CD4-positive, alpha-beta T cell (primary cell): ENCODE measurements at regions of chr22 and their contacts with region 1.

Region 1: GRCh38 chr22:37843741-37843990 is 468 bp downstream of the ANKRD54 start:
- DNase-seq: peak in 3 of 14 experiments; percentile 46 to 55 (median 48)
- ATAC-seq: peak; percentile 23
- H3K4me3 ChIP-seq: peak overlapping the region; percentile 54
- H3K4me3 Mint-ChIP-seq: peak overlapping the region; percentile 89
- H3K27ac ChIP-seq: peak overlapping the region in 1 of 2 donors; percentile 82
- H3K27ac Mint-ChIP-seq: peak overlapping the region; percentile 82
- H3K4me1 ChIP-seq: peaks cover 28% of the 10 kb centered on the region
- H3K4me1 Mint-ChIP-seq: peaks cover 19% of the 10 kb centered on the region
- H3K27me3 ChIP-seq: no peaks in the 10 kb centered on the region
- H3K27me3 Mint-ChIP-seq: no peaks in the 10 kb centered on the region
- CTCF ChIP-seq: no peak

Region 2: GRCh38 chr22:37686002-37686982 is 157.4 kb before region 1 on chr22 and contains the start of gene NOL12:
- CTCF ChIA-PET with region 1: no interaction called
- POLR2A ChIA-PET with region 1: interaction called, 6 read pairs
- intact Hi-C with region 1: loop called in 1 of 2 experiments (anchors 5 kb)
- DNase-seq: peak; percentile 64 to 90 (median 72)
- ATAC-seq: peak; percentile 92
- H3K4me3 ChIP-seq: peak within 1 kb of the TSS; percentile 72
- H3K4me3 Mint-ChIP-seq: peak within 1 kb of the TSS; percentile 90
- H3K27ac ChIP-seq: peak within 1 kb of the TSS; percentile 75 to 80
- H3K27ac Mint-ChIP-seq: peak within 1 kb of the TSS; percentile 76
- H3K4me1 ChIP-seq: peaks cover 38% of the 10 kb centered on the region
- H3K4me1 Mint-ChIP-seq: peaks cover 27% of the 10 kb centered on the region
- H3K27me3 ChIP-seq: no peaks in the 10 kb centered on the region
- H3K27me3 Mint-ChIP-seq: no peaks in the 10 kb centered on the region
- CTCF ChIP-seq: no peak
- total RNA-seq, gene NOL12: 24.3 to 26.2 TPM

Region 3: DNA sequence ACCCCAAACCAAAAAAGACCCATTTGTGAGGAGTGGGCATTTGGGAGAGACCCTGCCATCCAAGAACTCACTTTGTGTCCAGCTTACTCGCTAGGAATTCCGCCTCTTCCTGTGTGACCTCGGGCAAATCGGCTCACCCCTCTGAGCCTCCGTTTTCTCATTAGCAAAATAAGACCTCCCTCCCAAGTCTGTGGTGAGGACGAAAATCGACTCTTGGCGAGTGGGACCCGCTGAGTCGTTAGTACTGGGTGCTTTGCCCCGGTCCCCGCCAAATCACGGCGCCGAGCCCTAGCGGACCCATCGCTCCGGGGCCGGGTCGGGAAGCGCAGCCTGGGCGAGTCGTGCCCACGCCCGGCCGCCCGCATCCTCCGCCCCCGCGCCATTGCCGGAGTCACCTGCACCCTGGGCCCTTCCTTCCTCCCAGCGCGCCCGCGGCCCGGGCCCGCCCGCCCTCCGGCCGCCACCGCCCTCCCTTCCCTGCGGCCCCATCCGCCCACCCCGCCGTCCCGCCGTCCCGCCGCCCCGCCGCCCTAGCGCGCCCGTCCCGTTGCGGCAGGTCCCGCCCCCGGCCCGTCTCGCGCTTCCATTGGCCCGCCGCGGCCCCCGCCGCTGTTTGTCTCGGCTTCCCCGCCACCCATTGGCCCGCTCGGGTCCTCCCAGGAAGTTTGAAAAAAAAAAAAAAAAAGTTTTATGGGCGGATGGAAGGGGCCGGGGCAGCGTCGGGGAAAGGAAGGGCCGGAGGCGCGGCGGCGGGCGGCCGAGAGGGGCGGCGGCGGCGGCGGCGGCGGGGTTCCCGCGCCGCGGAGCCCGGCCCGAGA is 97.9 kb before region 1 on chr22:
- CTCF ChIA-PET with region 1: no interaction called
- POLR2A ChIA-PET with region 1: interaction called, 5 read pairs
- intact Hi-C with region 1: loop called in 1 of 2 experiments (anchors 5 kb)
- DNase-seq: peak; percentile 68 to 92 (median 84)
- ATAC-seq: peak; percentile 95
- H3K4me3 ChIP-seq: peak overlapping the region; percentile 90
- H3K4me3 Mint-ChIP-seq: peak overlapping the region; percentile 96
- H3K27ac ChIP-seq: peak overlapping the region in 1 of 2 donors; percentile 13
- H3K27ac Mint-ChIP-seq: peak overlapping the region; percentile 83
- H3K4me1 ChIP-seq: peaks cover 27% of the 10 kb centered on the region
- H3K4me1 Mint-ChIP-seq: peaks cover 22% of the 10 kb centered on the region
- H3K27me3 ChIP-seq: no peaks in the 10 kb centered on the region
- H3K27me3 Mint-ChIP-seq: no peaks in the 10 kb centered on the region
- CTCF ChIP-seq: no peak

Region 4: GRCh38 chr22:37807410-37808293 is 36.0 kb before region 1 on chr22 and contains the start of gene GCAT:
- CTCF ChIA-PET with region 1: no interaction called
- POLR2A ChIA-PET with region 1: interaction called, 12 read pairs
- intact Hi-C with region 1: loop called in 1 of 2 experiments (anchors 5 kb)
- DNase-seq: peak; percentile 61 to 96 (median 79)
- ATAC-seq: peak; percentile 81
- H3K4me3 ChIP-seq: peak within 1 kb of the TSS; percentile 58
- H3K4me3 Mint-ChIP-seq: peak within 1 kb of the TSS; percentile 84
- H3K27ac ChIP-seq: no peak within 1 kb of the TSS
- H3K27ac Mint-ChIP-seq: no peak within 1 kb of the TSS
- H3K4me1 ChIP-seq: peaks cover 61% of the 10 kb centered on the region
- H3K4me1 Mint-ChIP-seq: peaks cover 46% of the 10 kb centered on the region
- H3K27me3 ChIP-seq: peaks cover 50 to 66% of the 10 kb centered on the region in 2 experiments
- H3K27me3 Mint-ChIP-seq: peaks cover 43% of the 10 kb centered on the region
- CTCF ChIP-seq: no peak
- total RNA-seq, gene GCAT: 1.4 to 1.8 TPM

Region 5: GRCh38 chr22:37817705-37818408 is 25.8 kb before region 1 on chr22:
- CTCF ChIA-PET with region 1: interaction called, 4 read pairs
- POLR2A ChIA-PET with region 1: interaction called, 5 read pairs
- intact Hi-C with region 1: loop called in 1 of 2 experiments (anchors 2 kb)
- DNase-seq: peak; percentile 53 to 88 (median 78)
- ATAC-seq: peak; percentile 77
- H3K4me3 ChIP-seq: peak overlapping the region; percentile 36
- H3K4me3 Mint-ChIP-seq: no peak overlapping the region
- H3K27ac ChIP-seq: no peak overlapping the region
- H3K27ac Mint-ChIP-seq: no peak overlapping the region
- H3K4me1 ChIP-seq: peaks cover 21% of the 10 kb centered on the region
- H3K4me1 Mint-ChIP-seq: peaks cover 3% of the 10 kb centered on the region
- H3K27me3 ChIP-seq: peaks cover 5 to 15% of the 10 kb centered on the region in 2 experiments
- H3K27me3 Mint-ChIP-seq: peaks cover 38% of the 10 kb centered on the region
- CTCF ChIP-seq: peak; percentile 83

Region 6: GRCh38 chr22:37862570-37863325 is 19.1 kb after region 1 on chr22:
- CTCF ChIA-PET with region 1: interaction called, 10 read pairs
- POLR2A ChIA-PET with region 1: interaction called, 5 read pairs
- intact Hi-C with region 1: loop called in 1 of 2 experiments (anchors 2 kb)
- DNase-seq: no peak
- ATAC-seq: no peak
- H3K4me3 ChIP-seq: no peak overlapping the region
- H3K4me3 Mint-ChIP-seq: no peak overlapping the region
- H3K27ac ChIP-seq: no peak overlapping the region
- H3K27ac Mint-ChIP-seq: no peak overlapping the region
- H3K4me1 ChIP-seq: peaks cover 3% of the 10 kb centered on the region
- H3K4me1 Mint-ChIP-seq: peaks cover 7% of the 10 kb centered on the region
- H3K27me3 ChIP-seq: no peaks in the 10 kb centered on the region
- H3K27me3 Mint-ChIP-seq: no peaks in the 10 kb centered on the region
- CTCF ChIP-seq: no peak

Region 7: DNA sequence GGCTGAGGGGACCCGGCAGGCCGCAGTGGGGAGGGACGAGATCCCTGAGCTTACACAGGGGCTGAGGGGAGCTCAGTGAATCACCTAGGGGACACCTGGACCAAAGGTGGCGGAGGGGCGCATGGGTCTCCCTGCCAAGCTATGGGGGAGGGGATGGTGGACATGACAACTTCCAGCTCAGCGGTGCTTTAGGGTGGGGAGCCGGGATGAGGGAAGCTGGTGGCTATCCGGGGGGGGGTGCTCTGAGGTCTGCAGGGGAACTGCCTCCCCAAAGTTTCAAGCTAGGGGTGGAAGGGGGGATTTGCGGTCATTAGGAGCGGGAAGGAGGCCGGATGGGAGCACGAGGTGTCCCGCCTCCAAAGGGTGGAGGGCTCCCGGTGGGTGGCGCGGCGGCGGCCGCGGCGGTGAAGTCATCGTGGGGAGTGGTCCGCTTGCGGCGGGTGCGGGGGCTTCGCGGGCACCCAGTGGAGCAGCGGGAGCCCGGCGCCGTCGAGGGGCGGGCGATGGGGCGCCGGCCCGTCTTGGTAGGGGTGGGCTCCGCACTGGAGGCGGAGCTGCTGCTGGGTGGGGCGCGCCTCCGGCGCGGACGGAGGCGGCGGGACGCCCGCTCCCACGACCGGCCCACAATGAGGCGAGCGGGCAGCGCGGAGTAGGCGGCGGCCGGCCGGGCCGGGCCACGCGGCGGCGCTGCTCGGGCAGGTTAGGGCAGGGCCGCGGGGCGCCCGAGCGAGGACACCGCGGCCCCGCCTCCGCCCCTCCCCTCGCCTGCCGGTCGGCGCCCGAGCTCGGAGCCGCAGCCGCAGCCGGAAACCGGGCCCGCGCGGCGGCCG is 62.1 kb after region 1 on chr22 and contains the start of gene MICALL1:
- CTCF ChIA-PET with region 1: no interaction called
- POLR2A ChIA-PET with region 1: interaction called, 10 read pairs
- intact Hi-C with region 1: no loop called
- DNase-seq: peak; percentile 31 to 88 (median 69)
- ATAC-seq: peak; percentile 78
- H3K4me3 ChIP-seq: peak within 1 kb of the TSS; percentile 60
- H3K4me3 Mint-ChIP-seq: peak within 1 kb of the TSS; percentile 91
- H3K27ac ChIP-seq: peak within 1 kb of the TSS; percentile 55 to 64
- H3K27ac Mint-ChIP-seq: peak within 1 kb of the TSS; percentile 87
- H3K4me1 ChIP-seq: peaks cover 22% of the 10 kb centered on the region
- H3K4me1 Mint-ChIP-seq: peaks cover 28% of the 10 kb centered on the region
- H3K27me3 ChIP-seq: no peaks in the 10 kb centered on the region
- H3K27me3 Mint-ChIP-seq: no peaks in the 10 kb centered on the region
- CTCF ChIP-seq: no peak
- total RNA-seq, gene MICALL1: 16.9 to 20.7 TPM